PC-3 (cell line): ENCODE measurements at regions of chr3 and their contacts with region 1.

Region 1: GRCh38 chr3:184874709-184875644 is 63.0 kb downstream of the VPS8 start:
- DNase-seq: peak; percentile 63
- ATAC-seq: peak; percentile 69
- H3K4me3 ChIP-seq: no peak overlapping the region
- H3K27ac ChIP-seq: no peak overlapping the region
- H3K4me1 ChIP-seq: no peaks in the 10 kb centered on the region
- H3K27me3 ChIP-seq: no peaks in the 10 kb centered on the region
- CTCF ChIP-seq: peak; percentile 85

Region 2: GRCh38 chr3:184543843-184544512 is 331.0 kb before region 1 on chr3:
- CTCF ChIA-PET with region 1: no interaction called
- POLR2A ChIA-PET with region 1: no interaction called
- intact Hi-C with region 1: no loop called
- DNase-seq: peak; percentile 96
- ATAC-seq: peak; percentile 85
- H3K4me3 ChIP-seq: no peak overlapping the region
- H3K27ac ChIP-seq: no peak overlapping the region
- H3K4me1 ChIP-seq: no peaks in the 10 kb centered on the region
- H3K27me3 ChIP-seq: peaks cover 23% of the 10 kb centered on the region
- CTCF ChIP-seq: peak; percentile 89

Region 3: DNA sequence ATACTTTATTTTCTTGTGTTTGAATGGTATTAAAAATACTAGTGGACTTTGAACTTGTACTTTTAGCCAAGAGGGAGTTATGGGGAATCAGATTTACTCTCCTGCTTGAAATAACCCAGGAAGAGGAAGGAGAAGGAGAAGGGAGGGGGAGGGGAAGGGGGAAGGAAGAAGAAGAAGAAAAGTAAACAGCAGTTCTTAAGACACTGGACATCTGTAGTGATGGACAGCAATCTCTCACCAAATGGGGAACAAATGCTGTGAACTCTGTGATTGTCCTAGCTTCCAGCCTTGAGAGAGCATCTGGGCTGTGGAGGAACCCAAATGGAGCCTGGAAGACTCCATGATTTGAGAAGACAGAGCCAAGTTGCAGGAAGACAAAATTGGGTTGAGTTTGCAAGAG is 11.0 kb before region 1 on chr3:
- CTCF ChIA-PET with region 1: interaction called, 19 read pairs
- POLR2A ChIA-PET with region 1: no interaction called
- intact Hi-C with region 1: no loop called
- DNase-seq: no peak
- ATAC-seq: no peak
- H3K4me3 ChIP-seq: no peak overlapping the region
- H3K27ac ChIP-seq: no peak overlapping the region
- H3K4me1 ChIP-seq: no peaks in the 10 kb centered on the region
- H3K27me3 ChIP-seq: no peaks in the 10 kb centered on the region
- CTCF ChIP-seq: no peak

Region 4: DNA sequence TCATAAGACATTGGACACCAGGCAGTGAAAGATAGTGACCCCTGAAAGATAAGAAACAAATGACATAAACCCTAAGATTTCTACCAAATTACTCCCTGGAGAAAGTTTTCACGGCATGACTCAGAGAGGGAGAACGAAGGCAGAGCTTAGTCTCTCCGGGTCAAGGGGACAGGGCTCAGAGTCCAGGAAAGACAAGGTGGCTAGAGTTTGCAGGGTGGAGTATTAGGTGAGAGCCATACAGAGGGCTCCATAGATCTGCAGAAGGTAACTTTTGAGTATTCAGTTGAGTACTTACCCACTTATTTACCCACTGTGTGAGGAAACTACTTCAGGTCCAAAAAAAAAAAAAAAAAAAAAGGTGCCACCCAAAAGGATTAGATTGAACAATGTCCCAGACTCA is 134.7 kb after region 1 on chr3:
- CTCF ChIA-PET with region 1: no interaction called
- POLR2A ChIA-PET with region 1: no interaction called
- intact Hi-C with region 1: no loop called
- DNase-seq: no peak
- ATAC-seq: no peak
- H3K4me3 ChIP-seq: no peak overlapping the region
- H3K27ac ChIP-seq: no peak overlapping the region
- H3K4me1 ChIP-seq: no peaks in the 10 kb centered on the region
- H3K27me3 ChIP-seq: no peaks in the 10 kb centered on the region
- CTCF ChIP-seq: no peak

Region 5: DNA sequence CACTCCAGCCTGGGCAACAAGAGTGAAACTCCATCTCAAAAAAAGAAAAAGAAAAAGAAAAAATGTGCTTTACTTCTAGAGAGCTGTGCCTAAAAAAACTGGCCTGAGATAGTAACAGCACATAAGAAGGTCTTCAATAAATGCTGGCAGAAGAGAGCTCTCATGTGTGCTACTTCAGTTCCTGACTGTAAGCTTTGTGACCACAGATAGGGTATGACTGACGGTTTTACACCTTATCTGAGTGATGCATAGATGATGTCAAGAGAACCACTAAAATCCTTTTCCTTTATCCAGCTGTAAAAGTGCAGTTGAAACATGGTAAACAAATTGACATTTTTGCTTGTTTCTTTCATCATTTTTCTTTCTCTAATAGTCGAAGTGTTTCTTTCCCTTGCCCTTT is 150.0 kb after region 1 on chr3:
- CTCF ChIA-PET with region 1: no interaction called
- POLR2A ChIA-PET with region 1: no interaction called
- intact Hi-C with region 1: no loop called
- DNase-seq: no peak
- ATAC-seq: no peak
- H3K4me3 ChIP-seq: no peak overlapping the region
- H3K27ac ChIP-seq: no peak overlapping the region
- H3K4me1 ChIP-seq: no peaks in the 10 kb centered on the region
- H3K27me3 ChIP-seq: no peaks in the 10 kb centered on the region
- CTCF ChIP-seq: no peak

Region 6: DNA sequence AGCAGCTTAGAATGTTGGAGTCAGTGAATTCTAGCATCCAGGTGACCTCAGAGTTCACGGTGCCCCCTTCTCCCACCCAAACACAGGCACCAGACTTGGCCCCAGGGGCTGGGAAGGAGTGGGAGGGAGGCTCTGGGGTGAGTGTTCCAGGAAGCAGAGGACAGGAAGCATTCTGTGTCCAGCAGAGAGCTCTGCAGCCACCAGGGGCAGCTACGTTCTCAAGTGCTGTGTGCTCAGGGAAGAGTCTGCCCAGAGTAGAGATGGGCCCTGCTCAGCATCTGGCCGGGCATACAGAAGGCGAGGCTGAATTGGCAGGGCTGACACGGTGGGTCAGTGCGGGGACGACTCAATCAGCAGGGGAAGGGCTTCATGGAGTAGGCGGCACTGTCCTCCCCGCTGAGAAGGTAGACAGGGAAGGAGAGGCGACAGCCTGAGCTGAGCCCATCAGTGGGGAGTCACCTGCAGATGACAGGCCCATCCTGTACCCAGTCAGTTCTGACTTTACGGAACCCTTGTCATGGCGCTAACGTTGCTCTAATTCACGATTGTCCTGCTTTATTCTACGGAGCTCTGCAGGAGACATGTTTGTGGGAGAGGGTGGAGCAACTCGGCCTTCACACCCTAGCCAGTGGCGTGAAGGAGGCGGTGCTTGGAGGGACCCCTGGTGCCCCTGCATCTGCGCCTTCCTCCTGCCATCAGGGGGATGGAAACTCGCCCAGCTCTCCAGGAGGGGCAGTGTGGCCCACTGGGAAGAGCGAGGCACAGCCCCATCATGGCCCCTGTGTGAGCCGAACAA is 195.7 kb after region 1 on chr3:
- CTCF ChIA-PET with region 1: interaction called, 11 read pairs
- POLR2A ChIA-PET with region 1: no interaction called
- intact Hi-C with region 1: loop called (anchors 1 kb)
- DNase-seq: peak; percentile 46
- ATAC-seq: peak; percentile 93
- H3K4me3 ChIP-seq: no peak overlapping the region
- H3K27ac ChIP-seq: no peak overlapping the region
- H3K4me1 ChIP-seq: no peaks in the 10 kb centered on the region
- H3K27me3 ChIP-seq: no peaks in the 10 kb centered on the region
- CTCF ChIP-seq: peak; percentile 51

Region 7: GRCh38 chr3:185215873-185216606 is 341.1 kb after region 1 on chr3:
- CTCF ChIA-PET with region 1: no interaction called
- POLR2A ChIA-PET with region 1: no interaction called
- intact Hi-C with region 1: loop called (anchors 1 kb)
- DNase-seq: peak; percentile 44
- ATAC-seq: no peak
- H3K4me3 ChIP-seq: no peak overlapping the region
- H3K27ac ChIP-seq: no peak overlapping the region
- H3K4me1 ChIP-seq: no peaks in the 10 kb centered on the region
- H3K27me3 ChIP-seq: no peaks in the 10 kb centered on the region
- CTCF ChIP-seq: peak; percentile 66

Region 8: GRCh38 chr3:185781759-185782158 is 906.8 kb after region 1 on chr3:
- CTCF ChIA-PET with region 1: interaction called, 11 read pairs
- POLR2A ChIA-PET with region 1: no interaction called
- intact Hi-C with region 1: no loop called
- DNase-seq: peak; percentile 86
- ATAC-seq: peak; percentile 62
- H3K4me3 ChIP-seq: 0 out of 2 replicates have a peak overlapping the region, but pooled peaks have one; percentile 28
- H3K27ac ChIP-seq: peak overlapping the region; percentile 89
- H3K4me1 ChIP-seq: peaks cover 64% of the 10 kb centered on the region
- H3K27me3 ChIP-seq: no peaks in the 10 kb centered on the region
- CTCF ChIP-seq: no peak